AG04449 (cell line): ENCODE measurements at regions of chr15 and their contacts with region 1.

Region 1: GRCh38 chr15:98518823-98519561 is 129.3 kb upstream of the IGF1R start:
- DNase-seq: no peak
- H3K4me3 ChIP-seq: no peak overlapping the region
- CTCF ChIP-seq: peak; percentile 59

Region 2: GRCh38 chr15:98358971-98359370 is 160.0 kb before region 1 on chr15:
- CTCF ChIA-PET with region 1: no interaction called
- POLR2A ChIA-PET with region 1: no interaction called
- DNase-seq: no peak
- H3K4me3 ChIP-seq: no peak overlapping the region
- CTCF ChIP-seq: no peak

Region 3: GRCh38 chr15:98537516-98538060 is 18.6 kb after region 1 on chr15:
- CTCF ChIA-PET with region 1: interaction called, 13 read pairs
- POLR2A ChIA-PET with region 1: no interaction called
- DNase-seq: no peak
- H3K4me3 ChIP-seq: no peak overlapping the region
- CTCF ChIP-seq: no peak

Region 4: GRCh38 chr15:98779463-98780071 is 260.6 kb after region 1 on chr15:
- CTCF ChIA-PET with region 1: interaction called, 10 read pairs
- POLR2A ChIA-PET with region 1: no interaction called
- DNase-seq: no peak
- H3K4me3 ChIP-seq: no peak overlapping the region
- CTCF ChIP-seq: peak; percentile 92

Region 5: DNA sequence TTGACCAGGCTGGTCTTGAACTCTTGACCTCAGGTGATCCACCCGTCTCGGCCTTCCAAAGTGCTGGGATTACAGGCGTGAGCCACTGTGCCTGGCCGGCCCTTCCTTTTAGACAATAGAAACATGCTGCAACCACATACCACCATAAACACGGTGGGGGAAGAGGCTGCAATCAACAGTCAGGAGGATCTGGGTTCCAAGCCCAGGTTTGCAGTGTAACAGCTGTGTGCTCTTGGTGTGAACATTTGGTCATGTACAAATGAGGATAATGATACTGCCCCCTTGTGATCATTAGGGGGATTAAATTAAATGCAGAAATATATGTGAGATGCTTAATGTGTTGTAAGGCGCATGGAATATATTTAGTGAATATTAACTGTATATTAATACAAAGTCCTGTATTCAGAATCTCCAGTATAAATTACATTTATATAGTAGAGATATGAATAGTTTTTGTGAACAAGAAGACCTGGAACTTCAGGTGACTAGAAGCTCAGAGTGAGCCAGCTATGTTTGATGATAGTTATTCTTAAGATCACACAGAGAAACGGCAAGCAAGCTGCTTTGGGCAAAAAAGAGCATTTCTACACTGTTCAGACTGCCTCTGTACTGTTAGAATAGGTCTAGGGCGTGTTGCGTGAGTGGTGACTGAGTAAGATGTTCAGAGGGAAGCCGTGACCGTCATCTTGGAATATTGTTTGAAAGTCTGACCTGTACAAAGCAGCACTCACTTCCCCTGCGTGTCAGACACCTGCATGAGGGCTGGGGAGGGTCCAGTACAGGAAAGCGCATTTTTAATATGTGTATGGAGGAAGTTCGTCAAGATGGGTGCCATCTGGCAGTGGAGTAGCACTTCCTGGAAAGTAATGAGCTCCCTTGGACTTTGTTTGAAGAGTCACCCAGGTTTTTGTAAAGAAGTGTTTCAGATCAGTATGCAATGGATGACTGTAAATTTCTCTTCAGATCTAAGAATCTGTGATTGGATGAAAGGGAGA is 362.8 kb after region 1 on chr15:
- CTCF ChIA-PET with region 1: interaction called, 34 read pairs
- POLR2A ChIA-PET with region 1: interaction called, 7 read pairs
- DNase-seq: no peak
- H3K4me3 ChIP-seq: no peak overlapping the region
- CTCF ChIP-seq: no peak

Region 6: GRCh38 chr15:99059010-99059981 is 540.3 kb after region 1 on chr15:
- CTCF ChIA-PET with region 1: interaction called, 16 read pairs
- POLR2A ChIA-PET with region 1: no interaction called
- DNase-seq: peak; percentile 46
- H3K4me3 ChIP-seq: peak overlapping the region; percentile 50
- CTCF ChIP-seq: peak; percentile 59